GM10248 (cell line): ENCODE measurements at regions of chr3 and their contacts with region 1.

Region 1: GRCh38 chr3:10957976-10958749 is 34.4 kb upstream of the SLC6A1 start:
- DNase-seq: no peak
- CTCF ChIP-seq: no peak

Region 2: DNA sequence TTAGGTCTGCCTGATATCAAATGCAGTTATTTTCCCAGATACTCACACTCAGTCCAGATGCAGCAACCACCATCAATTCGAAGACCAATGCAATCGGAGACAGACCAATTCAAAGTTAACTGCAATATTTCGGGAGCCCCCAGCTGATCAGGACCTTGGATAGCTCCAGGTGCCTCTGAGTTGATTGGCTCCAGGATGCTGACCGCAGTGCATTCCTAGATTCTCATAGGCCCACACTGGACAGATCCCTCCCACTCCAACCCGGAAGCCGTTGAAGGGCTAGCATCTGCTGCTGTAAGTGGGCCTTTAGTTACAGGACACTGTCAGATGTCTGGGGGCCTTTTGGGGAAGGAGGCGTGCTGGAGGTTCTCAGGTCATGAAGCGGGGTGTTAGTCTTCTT is 363.2 kb before region 1 on chr3:
- CTCF ChIA-PET with region 1: no interaction called
- POLR2A ChIA-PET with region 1: no interaction called
- DNase-seq: peak; percentile 50
- CTCF ChIP-seq: no peak

Region 3: DNA sequence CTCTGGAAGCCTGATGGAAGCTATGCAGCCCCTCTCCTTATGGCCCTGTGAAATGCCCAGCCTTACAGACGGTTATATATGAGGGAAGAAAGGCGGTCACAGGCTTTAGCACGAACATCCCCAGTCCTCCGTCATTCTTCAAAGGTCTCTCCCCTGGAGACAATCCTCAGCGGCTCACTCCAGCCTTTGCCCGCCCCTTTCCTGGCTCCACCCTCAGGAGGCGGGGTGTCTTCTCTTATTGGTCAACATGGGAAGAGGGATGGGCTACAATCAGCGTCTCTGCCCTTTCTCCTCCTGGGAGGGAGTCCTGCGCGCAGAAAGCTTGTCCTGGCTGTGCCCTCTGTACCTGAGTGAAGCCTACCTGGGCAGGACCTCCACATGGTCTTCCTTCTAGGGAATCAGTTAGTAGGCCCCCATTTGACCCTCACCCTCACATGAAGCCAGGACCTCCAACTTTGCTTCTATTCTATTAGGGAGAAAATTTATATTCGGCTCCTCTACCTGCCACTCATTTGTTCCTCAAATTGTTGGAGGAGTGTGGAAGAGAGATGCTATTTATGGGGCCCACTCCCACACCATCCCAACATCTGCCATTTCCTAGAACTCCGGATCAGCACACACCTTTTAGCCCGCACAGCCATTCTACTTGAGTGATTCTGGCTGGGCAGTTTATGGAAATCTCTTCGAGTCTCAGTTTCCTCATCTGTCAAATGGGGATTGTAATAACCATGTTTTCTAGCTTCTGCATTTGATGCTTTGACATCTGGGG is 255.0 kb before region 1 on chr3:
- CTCF ChIA-PET with region 1: no interaction called
- POLR2A ChIA-PET with region 1: no interaction called
- DNase-seq: no peak
- CTCF ChIP-seq: no peak

Region 4: DNA sequence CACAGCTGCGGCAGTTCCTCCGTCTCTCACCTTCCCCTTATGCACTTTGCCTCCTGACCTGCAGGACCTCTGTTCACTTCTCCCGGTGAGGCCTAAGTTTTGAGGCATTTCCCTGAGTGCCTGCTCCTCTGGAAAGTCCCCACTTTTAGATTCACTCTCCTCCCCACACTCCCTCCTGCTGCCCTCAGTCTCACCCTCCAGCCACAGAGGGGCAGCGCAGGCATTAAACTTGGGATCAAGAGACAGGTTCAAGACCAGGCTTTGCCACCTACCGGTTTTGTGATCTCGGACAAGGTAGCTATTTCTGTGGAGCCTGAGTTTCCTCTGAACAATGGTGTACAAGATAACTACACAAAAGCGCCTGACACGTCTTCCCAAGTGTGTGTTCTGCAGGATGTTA is 122.8 kb before region 1 on chr3:
- CTCF ChIA-PET with region 1: no interaction called
- POLR2A ChIA-PET with region 1: no interaction called
- DNase-seq: no peak
- CTCF ChIP-seq: no peak

Region 5: DNA sequence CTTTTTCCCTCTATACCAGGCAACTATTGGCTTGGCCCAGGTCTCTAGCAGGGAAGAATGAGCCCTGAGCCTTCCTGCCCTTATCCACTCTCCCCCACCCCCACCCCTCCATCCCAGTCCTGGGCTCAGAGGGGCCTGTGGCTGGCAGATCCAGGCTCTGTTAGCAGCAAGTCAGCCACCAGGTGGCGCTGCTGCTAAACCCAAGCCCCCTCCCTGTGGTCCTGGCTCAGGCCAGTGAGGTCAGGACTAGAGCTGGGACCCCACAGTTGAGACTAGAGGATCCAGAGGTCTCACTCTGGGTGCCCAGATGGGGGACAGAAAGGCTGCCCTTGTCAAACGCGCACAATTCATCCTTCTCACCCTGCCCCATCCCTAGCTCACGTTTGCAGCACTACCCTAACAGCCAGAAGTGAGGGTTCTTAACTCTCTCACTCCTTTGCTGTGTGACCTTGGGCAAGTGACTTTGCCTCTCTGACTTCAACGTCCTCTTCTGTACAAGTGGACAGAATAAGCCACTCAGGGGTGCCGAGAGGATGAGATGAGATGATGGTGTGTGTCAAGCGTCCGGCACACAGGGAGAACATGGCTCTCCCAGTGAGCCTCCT is 12.4 kb before region 1 on chr3:
- CTCF ChIA-PET with region 1: interaction called, 13 read pairs
- POLR2A ChIA-PET with region 1: no interaction called
- DNase-seq: peak; percentile 79
- CTCF ChIP-seq: peak; percentile 86